ENCODE measurements at regions of chr22 and their contacts with region 1.

Region 1: GRCh38 chr22:42444077-42444904 is 12.1 kb upstream of the NFAM1 start:
- DNase-seq: peak; percentile 95
- ATAC-seq: peak; percentile 81
- H3K4me3 Mint-ChIP-seq: peak overlapping the region; percentile 63
- H3K27ac Mint-ChIP-seq: no peak overlapping the region
- H3K4me1 Mint-ChIP-seq: peaks cover 41% of the 10 kb centered on the region
- H3K27me3 Mint-ChIP-seq: peaks cover 20% of the 10 kb centered on the region
- CTCF ChIP-seq: peak; percentile 74

Region 2: DNA sequence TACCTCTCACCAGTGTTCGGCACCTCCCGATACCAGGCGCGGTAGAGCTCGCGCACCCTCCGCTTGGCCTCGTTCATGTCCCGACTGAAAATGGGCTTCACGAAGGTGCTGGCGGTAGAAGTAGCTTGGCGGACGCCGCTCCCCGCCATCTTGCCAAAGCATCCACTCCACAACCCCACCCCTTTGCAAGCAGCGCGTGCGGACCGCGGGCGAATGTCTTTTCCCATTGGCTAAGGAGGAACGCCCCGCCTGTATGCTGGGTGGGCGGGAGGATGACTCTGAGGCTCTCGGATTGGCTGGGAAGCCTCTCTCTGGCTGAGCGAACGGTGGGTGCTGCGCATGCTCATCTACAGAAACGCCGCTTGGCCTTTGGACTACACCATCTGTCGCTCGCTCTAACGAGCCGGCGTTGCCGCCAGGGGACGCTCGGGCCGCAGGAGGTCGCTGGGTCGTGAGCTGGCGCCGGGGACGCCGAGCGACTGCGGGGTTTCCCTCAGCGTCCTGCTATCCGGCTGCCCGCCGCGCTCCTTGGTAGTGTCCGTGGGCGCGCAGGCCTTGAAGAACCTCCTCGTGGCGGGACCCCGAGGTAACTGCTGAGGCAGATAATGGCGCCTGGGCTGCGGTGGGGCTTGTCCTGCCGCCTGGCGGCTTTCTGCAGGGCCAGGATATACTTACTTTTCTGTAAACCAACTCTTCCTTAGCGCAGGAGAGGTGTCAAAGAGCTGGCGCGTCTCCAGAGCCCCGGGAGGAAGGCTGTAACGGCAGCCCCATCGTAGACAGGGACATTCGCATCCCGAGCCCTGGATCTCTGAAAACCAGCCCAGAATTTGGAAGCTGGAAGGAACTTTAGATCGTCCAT is 353.5 kb before region 1 on chr22 and contains the start of gene NDUFA6:
- CTCF ChIA-PET with region 1: interaction called, 24 read pairs
- POLR2A ChIA-PET with region 1: no interaction called
- DNase-seq: peak; percentile 98
- ATAC-seq: peak; percentile 97
- H3K4me3 Mint-ChIP-seq: peak within 1 kb of the TSS; percentile 97
- H3K27ac Mint-ChIP-seq: peak within 1 kb of the TSS; percentile 99
- H3K4me1 Mint-ChIP-seq: peaks cover 12% of the 10 kb centered on the region; the same call in 1 of the 2 replicates
- H3K27me3 Mint-ChIP-seq: peaks cover under 1% of the 10 kb centered on the region; the same call in 1 of the 2 replicates
- CTCF ChIP-seq: peak; percentile 58; the same call in 1 of the 2 replicates
- total RNA-seq, gene NDUFA6: 84.6 to 90.8 TPM (median 85.9 TPM) in 3 replicates

Region 3: GRCh38 chr22:42283278-42284201 is 160.8 kb before region 1 on chr22:
- CTCF ChIA-PET with region 1: interaction called, 13 read pairs
- POLR2A ChIA-PET with region 1: no interaction called
- DNase-seq: no peak
- ATAC-seq: peak; percentile 32; the same call in 1 of the 2 replicates
- H3K4me3 Mint-ChIP-seq: peak overlapping the region; percentile 61
- H3K27ac Mint-ChIP-seq: no peak overlapping the region
- H3K4me1 Mint-ChIP-seq: peaks cover 8% of the 10 kb centered on the region
- H3K27me3 Mint-ChIP-seq: peaks cover 66% of the 10 kb centered on the region
- CTCF ChIP-seq: no peak

Region 4: DNA sequence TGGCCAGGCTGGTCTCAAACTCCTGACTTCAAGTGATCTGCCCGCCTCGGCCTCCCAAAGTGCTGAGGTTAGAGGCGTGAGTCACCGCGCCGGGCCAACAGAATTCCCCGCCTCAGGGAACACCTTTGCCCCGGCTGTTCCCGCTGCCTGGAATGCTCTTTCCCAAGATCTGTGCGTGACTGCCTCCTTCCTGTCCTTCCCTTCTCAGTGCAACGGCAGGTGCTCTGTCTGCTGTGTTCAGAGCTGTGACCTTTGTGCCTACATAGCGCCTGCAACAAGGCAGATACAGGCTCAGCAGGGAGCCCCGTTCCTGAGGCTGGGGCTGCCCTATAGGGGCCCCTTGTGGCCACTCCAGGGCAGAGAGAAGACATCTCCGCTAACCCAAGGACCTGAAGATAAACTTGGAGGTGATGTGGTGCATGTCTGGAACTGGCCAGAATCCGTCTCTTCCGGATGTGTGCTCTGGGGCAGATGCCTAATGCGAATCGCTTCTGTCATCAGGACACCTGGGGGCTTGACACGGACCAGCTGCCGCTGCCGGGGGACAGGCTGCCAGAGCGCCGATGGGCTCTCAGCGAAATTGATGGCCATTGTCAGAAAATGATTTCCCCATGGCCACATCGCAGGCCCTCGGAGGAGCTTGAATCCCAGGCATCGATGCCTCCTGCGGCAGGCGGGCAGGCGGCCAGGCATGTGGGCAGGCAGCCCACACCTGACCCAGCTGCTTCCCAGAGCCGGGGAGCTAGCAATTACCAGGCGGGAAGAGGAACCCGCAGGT is 130.3 kb before region 1 on chr22:
- CTCF ChIA-PET with region 1: interaction called, 13 read pairs
- POLR2A ChIA-PET with region 1: no interaction called
- DNase-seq: peak; percentile 86
- ATAC-seq: peak; percentile 83
- H3K4me3 Mint-ChIP-seq: no peak overlapping the region
- H3K27ac Mint-ChIP-seq: peak overlapping the region; percentile 84; the same call in 1 of the 2 replicates
- H3K4me1 Mint-ChIP-seq: peaks cover 39% of the 10 kb centered on the region
- H3K27me3 Mint-ChIP-seq: no peaks in the 10 kb centered on the region; the same call in 1 of the 2 replicates
- CTCF ChIP-seq: 0 out of 2 replicates have a peak, but pooled peaks have one; percentile 31

Region 5: GRCh38 chr22:42332089-42332488 is 112.2 kb before region 1 on chr22:
- CTCF ChIA-PET with region 1: no interaction called
- POLR2A ChIA-PET with region 1: no interaction called
- DNase-seq: no peak
- ATAC-seq: no peak
- H3K4me3 Mint-ChIP-seq: no peak overlapping the region
- H3K27ac Mint-ChIP-seq: no peak overlapping the region
- H3K4me1 Mint-ChIP-seq: peaks cover 4% of the 10 kb centered on the region; the same call in 1 of the 2 replicates
- H3K27me3 Mint-ChIP-seq: no peaks in the 10 kb centered on the region
- CTCF ChIP-seq: no peak

Region 6: GRCh38 chr22:42376711-42377554 is 67.4 kb before region 1 on chr22:
- CTCF ChIA-PET with region 1: interaction called, 12 read pairs
- POLR2A ChIA-PET with region 1: interaction called, 6 read pairs
- DNase-seq: peak; percentile 65
- ATAC-seq: peak; percentile 78
- H3K4me3 Mint-ChIP-seq: no peak overlapping the region
- H3K27ac Mint-ChIP-seq: no peak overlapping the region
- H3K4me1 Mint-ChIP-seq: peaks cover 43% of the 10 kb centered on the region
- H3K27me3 Mint-ChIP-seq: peaks cover 17% of the 10 kb centered on the region
- CTCF ChIP-seq: no peak

Region 7: DNA sequence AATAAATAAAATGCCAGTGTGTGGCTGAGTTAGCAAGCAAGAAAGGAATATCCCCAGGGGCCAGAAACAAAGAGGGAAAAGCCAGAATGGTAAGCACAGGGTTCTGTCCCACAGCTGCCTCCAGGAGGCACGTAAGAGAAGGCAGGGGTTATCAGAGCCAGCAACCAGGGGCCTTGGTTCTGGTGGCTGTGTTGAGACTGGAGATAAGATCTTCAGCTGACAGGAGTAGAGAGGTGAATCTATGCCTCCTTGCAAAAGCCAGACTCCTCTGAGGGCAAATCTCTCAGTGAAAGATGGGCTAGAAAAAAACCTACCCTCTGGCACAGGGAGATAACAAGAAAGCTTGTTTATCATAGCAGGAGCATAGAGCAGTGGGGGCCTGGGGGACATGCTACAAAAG is 17.7 kb after region 1 on chr22:
- CTCF ChIA-PET with region 1: interaction called, 24 read pairs
- POLR2A ChIA-PET with region 1: no interaction called
- DNase-seq: no peak
- ATAC-seq: no peak
- H3K4me3 Mint-ChIP-seq: no peak overlapping the region
- H3K27ac Mint-ChIP-seq: 0 out of 2 replicates have a peak overlapping the region, but pooled peaks have one; percentile 8
- H3K4me1 Mint-ChIP-seq: peaks cover 34% of the 10 kb centered on the region
- H3K27me3 Mint-ChIP-seq: peaks cover 18% of the 10 kb centered on the region
- CTCF ChIP-seq: no peak